PC-9 (cell line): ENCODE measurements at regions of chr22 and their contacts with region 1.

Region 1: DNA sequence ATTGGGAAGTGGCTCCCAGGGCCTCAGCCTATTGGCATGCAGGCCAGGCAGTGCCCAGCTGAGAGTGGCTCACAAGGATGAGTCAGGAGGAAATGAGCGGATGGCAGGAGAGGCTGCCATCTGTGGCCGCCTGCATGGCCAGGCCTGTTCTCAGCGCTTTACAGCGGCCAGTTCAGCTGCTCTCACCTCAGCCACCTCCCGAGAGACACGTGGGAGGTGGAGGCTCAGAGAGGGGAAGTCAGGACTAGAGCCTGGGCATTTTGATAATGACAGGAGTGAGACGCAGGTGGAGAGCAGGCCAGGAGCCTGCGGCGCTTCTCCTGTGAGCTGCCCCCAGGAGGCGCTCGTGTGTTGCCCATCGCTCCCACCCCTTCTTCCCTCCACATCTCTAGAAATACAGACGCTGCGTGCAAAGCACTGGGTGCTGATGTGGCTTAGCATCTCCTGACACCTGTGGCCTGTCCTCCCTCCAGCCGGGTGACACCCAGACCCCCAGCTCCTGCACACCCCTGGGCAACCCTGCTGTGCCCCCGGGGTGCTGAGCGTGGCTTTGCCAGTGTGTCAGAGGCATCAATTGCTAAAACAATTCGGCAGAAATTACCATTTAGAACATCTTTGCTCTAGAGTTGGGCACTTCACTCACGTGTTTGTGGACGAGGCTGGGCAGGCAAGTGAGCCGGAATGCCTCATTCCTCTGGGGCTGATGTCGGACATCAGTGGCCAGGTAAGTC is 21.4 kb upstream of the PANX2 start:
- DNase-seq: peak; percentile 86 to 89
- H3K4me3 ChIP-seq: no peak overlapping the region
- H3K27ac ChIP-seq: no peak overlapping the region
- H3K4me1 ChIP-seq: no peaks in the 10 kb centered on the region
- H3K27me3 ChIP-seq: peaks cover 4% of the 10 kb centered on the region; the same call in 1 of the 2 replicates
- CTCF ChIP-seq: peak; percentile 95

Region 2: GRCh38 chr22:49767355-49768062 is 381.6 kb before region 1 on chr22:
- CTCF ChIA-PET with region 1: no interaction called
- POLR2A ChIA-PET with region 1: no interaction called
- intact Hi-C with region 1: loop called (anchors 5 kb)
- DNase-seq: peak; percentile 40 to 53
- H3K4me3 ChIP-seq: no peak overlapping the region
- H3K27ac ChIP-seq: no peak overlapping the region
- H3K4me1 ChIP-seq: no peaks in the 10 kb centered on the region
- H3K27me3 ChIP-seq: peaks cover 13% of the 10 kb centered on the region; the same call in 1 of the 2 replicates
- CTCF ChIP-seq: peak; percentile 97

Region 3: DNA sequence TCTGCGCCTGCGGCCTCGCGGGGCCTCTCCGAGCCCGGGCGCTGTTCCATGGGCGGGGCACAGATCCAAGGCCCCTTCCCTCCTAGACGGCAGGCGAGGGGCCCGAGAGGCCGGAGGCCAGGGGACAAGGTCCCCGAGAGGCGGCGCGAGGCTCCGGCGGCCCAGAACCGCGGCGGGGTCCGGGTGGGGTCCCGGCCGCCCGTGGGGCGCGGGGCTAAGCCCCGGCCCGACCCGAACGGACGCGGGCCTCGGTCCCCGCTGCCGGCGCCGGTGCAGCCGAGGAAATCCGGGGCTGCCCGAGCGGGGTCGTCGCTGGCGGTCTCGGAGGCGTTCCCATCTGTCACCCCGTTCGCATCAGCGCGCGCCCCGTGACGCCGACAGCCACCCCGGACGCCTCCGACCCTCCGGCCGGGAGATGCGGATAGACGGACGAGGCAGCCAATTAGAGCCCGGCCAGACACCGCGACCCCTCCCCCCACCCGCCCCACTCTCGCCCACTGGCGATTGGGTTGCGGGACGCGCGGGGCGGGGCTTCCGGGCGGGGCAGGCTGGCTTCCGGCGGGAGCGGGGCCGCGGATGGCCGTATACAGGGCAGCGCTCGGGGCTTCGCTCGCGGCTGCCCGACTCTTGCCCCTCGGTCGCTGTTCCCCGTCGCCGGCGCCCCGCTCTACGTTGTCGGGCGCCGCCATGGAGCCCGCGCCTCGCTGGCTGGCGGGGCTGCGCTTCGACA is 51.5 kb after region 1 on chr22 and contains the start of gene SELENOO:
- CTCF ChIA-PET with region 1: interaction called, 3 read pairs
- POLR2A ChIA-PET with region 1: no interaction called
- intact Hi-C with region 1: loop called (anchors 2 kb)
- DNase-seq: peak; percentile 82 to 89
- H3K4me3 ChIP-seq: peak within 1 kb of the TSS; percentile 89
- H3K27ac ChIP-seq: no peak within 1 kb of the TSS
- H3K4me1 ChIP-seq: peaks cover 12% of the 10 kb centered on the region
- H3K27me3 ChIP-seq: no peaks in the 10 kb centered on the region
- CTCF ChIP-seq: no peak
- total RNA-seq, gene SELENOO: 27.4 and 36.2 TPM in 2 replicates

Region 4: GRCh38 chr22:50209893-50210292 is 60.7 kb after region 1 on chr22:
- CTCF ChIA-PET with region 1: interaction called, 3 read pairs
- POLR2A ChIA-PET with region 1: no interaction called
- intact Hi-C with region 1: loop called (anchors 1 kb)
- DNase-seq: peak; percentile 48 to 53
- H3K4me3 ChIP-seq: no peak overlapping the region
- H3K27ac ChIP-seq: no peak overlapping the region
- H3K4me1 ChIP-seq: no peaks in the 10 kb centered on the region
- H3K27me3 ChIP-seq: no peaks in the 10 kb centered on the region
- CTCF ChIP-seq: peak; percentile 98

Region 5: GRCh38 chr22:50620593-50621355 is 471.6 kb after region 1 on chr22:
- CTCF ChIA-PET with region 1: no interaction called
- POLR2A ChIA-PET with region 1: no interaction called
- intact Hi-C with region 1: loop called (anchors 1 kb)
- DNase-seq: no peak
- H3K4me3 ChIP-seq: peak overlapping the region; percentile 38; the same call in 1 of the 2 replicates
- H3K27ac ChIP-seq: no peak overlapping the region
- H3K4me1 ChIP-seq: peaks cover 31% of the 10 kb centered on the region
- H3K27me3 ChIP-seq: no peaks in the 10 kb centered on the region
- CTCF ChIP-seq: peak; percentile 96